ENCODE measurements at regions of chr18 and their contacts with region 1.

Region 1: GRCh38 chr18:58998401-58999203 is 133.9 kb downstream of the ZNF532 start:
- DNase-seq: peak; percentile 70
- ATAC-seq: peak; percentile 64
- H3K4me3 ChIP-seq: peak overlapping the region; percentile 23; the same call in 1 of the 2 replicates
- H3K27ac ChIP-seq: peak overlapping the region; percentile 41
- H3K4me1 ChIP-seq: peaks cover 6% of the 10 kb centered on the region
- H3K27me3 ChIP-seq: no peaks in the 10 kb centered on the region
- CTCF ChIP-seq: no peak
- POLR2A ChIP-seq: no peak; the same call in 1 of the 2 replicates
- RAD21 ChIP-seq: 0 out of 2 replicates have a peak, but pooled peaks have one; percentile 1

Region 2: GRCh38 chr18:58303363-58303762 is 695.2 kb before region 1 on chr18:
- CTCF ChIA-PET with region 1: no interaction called
- POLR2A ChIA-PET with region 1: no interaction called
- dilution Hi-C with region 1: no loop called
- in situ Hi-C with region 1: no loop called
- intact Hi-C with region 1: no loop called
- DNase-seq: no peak
- ATAC-seq: no peak
- H3K4me3 ChIP-seq: no peak overlapping the region
- H3K27ac ChIP-seq: no peak overlapping the region
- H3K4me1 ChIP-seq: peaks cover 3% of the 10 kb centered on the region
- H3K27me3 ChIP-seq: peaks cover 15% of the 10 kb centered on the region
- CTCF ChIP-seq: no peak
- POLR2A ChIP-seq: no peak
- RAD21 ChIP-seq: no peak

Region 3: GRCh38 chr18:58975296-58975695 is 23.3 kb before region 1 on chr18:
- CTCF ChIA-PET with region 1: interaction called, 11 read pairs
- POLR2A ChIA-PET with region 1: no interaction called
- dilution Hi-C with region 1: no loop called
- in situ Hi-C with region 1: no loop called
- intact Hi-C with region 1: no loop called
- DNase-seq: no peak
- ATAC-seq: peak; percentile 35; the same call in 1 of the 2 replicates
- H3K4me3 ChIP-seq: no peak overlapping the region
- H3K27ac ChIP-seq: no peak overlapping the region; the same call in 1 of the 2 replicates
- H3K4me1 ChIP-seq: peaks cover 8% of the 10 kb centered on the region
- H3K27me3 ChIP-seq: no peaks in the 10 kb centered on the region
- CTCF ChIP-seq: no peak
- POLR2A ChIP-seq: no peak
- RAD21 ChIP-seq: no peak

Region 4: GRCh38 chr18:59733421-59733820 is 734.8 kb after region 1 on chr18:
- CTCF ChIA-PET with region 1: no interaction called
- POLR2A ChIA-PET with region 1: no interaction called
- dilution Hi-C with region 1: no loop called
- in situ Hi-C with region 1: no loop called
- intact Hi-C with region 1: no loop called
- DNase-seq: no peak
- ATAC-seq: no peak
- H3K4me3 ChIP-seq: no peak overlapping the region
- H3K27ac ChIP-seq: no peak overlapping the region
- H3K4me1 ChIP-seq: peaks cover 7% of the 10 kb centered on the region
- H3K27me3 ChIP-seq: no peaks in the 10 kb centered on the region
- CTCF ChIP-seq: no peak
- POLR2A ChIP-seq: no peak
- RAD21 ChIP-seq: no peak

Measured in IMR-90 (cell line).